Posterior cingulate gyrus (tissue), 11 donors: ENCODE measurements at regions of chr5 and their contacts with region 1.

Region 1: DNA sequence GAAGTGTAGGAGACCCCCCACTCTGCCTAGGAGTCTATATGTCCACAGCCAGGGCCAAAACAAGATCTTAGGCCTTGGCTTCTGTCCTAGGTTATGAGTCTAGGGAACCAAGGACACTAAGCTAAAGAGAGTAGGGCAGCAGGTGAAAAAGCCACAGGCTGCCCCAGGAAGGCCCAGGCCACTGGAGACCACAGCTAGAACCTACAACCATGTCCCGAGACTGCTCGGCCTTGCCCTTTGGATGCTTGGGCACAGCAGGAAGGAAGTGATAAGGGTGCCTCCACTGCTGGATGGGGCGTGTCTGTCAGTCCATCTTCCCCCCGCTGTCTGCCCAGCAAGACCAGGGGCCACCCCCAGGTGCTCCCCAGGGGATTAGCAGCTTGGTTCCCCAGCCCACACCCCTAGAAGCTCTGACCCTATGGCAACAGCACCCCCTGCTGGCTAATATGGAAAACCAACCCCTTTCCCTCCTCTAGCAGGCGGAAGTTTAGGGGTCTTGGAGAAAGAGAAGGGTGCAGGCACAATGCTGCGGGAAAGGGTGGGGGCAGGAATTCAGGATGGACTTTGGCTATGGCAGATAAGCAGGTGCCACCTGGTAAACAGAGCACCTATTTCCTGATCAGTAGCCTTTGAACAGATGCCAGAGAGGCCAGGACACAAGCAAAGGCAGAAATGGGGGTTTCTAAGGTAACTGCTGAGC is 10.5 kb upstream of the IRF1 start:
- DNase-seq: peak in 7 of 10 donors; percentile 26 to 90 (median 69)

Region 2: GRCh38 chr5:132238169-132238744 is 262.8 kb before region 1 on chr5:
- intact Hi-C with region 1: loop called (anchors 10 kb)
- DNase-seq: peak in 8 of 10 donors; percentile 72 to 93 (median 80)

Region 3: GRCh38 chr5:132386644-132387286 is 114.3 kb before region 1 on chr5:
- intact Hi-C with region 1: loop called (anchors 1 kb)
- DNase-seq: peak in 9 of 10 donors; percentile 47 to 96 (median 70)

Region 4: GRCh38 chr5:132419502-132420468 is 81.3 kb before region 1 on chr5:
- intact Hi-C with region 1: loop called (anchors 1 kb)
- DNase-seq: peak; percentile 52 to 96 (median 70)

Region 5: GRCh38 chr5:132591145-132591544 is 90.1 kb after region 1 on chr5:
- intact Hi-C with region 1: no loop called
- DNase-seq: no peak

Region 6: DNA sequence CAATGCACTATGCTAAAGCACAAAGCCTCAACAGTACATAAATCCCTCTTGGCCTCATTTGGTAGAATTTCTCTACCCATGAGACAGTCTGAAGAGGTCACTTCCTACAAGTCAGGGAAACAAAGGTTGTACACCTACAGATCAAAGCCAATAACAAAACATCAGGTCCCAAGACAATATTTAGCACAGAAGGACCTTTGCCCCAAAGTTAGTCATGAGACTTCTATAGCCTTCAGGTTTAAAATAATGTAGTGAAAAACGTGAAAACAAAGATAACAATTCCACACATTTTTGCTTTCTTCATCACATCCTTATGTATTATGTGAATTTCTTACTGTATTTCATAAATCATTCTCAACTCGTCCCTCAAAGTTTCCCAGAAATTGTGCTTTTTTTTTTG is 446.6 kb after region 1 on chr5:
- intact Hi-C with region 1: no loop called
- DNase-seq: no peak

Region 7: DNA sequence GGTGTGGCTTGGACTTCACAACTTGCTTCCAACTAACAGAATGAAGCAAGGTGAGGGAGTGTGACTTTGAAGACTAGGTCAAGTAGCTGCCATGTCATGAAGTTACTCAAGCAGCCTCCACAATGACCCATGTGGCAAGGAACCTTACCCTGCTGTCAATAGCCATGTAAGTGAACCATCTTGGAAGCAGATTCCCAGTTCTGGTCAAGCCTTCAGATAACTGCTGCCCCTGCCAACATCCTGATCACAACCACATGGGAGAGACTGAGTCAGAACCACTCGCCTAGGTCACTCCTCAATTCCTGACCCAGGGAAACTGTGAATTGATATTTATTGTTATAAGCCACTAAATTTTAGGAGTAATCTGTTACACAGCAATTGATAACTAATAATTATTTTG is 514.4 kb after region 1 on chr5:
- intact Hi-C with region 1: no loop called
- DNase-seq: no peak